WTC11 (cell line): ENCODE measurements at regions of chr17 and their contacts with region 1.

Region 1: DNA sequence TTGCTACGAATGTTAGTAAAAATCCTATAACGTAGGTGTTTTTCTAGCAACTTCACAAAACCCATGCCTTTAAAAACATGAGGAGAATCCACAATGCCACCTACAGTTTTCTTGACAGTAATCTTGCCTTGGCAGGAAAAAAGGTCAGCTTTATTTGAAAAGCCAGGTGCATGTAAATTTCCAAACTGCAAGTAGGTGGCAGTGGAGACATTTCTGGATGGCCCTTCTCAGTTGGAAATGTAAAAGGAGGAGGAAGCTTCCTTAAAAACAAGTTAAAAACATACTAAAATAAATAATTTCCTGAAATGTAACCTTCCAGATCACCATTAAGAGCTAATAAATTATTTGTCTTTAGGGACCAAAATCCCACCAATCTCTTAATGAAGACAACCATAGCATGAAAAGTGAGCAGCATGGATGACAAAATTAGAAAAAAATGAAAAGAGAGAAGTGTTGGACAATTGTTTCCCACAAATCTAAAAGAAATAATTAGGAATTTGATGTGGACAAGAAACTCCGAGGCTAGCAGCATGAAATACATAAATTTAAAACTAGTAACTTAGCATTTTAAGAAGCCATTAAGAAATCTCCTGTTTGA is 152.2 kb downstream of the SNX11 start:
- DNase-seq: no peak
- ATAC-seq: no peak
- H3K4me3 Mint-ChIP-seq: no peak overlapping the region
- H3K27ac Mint-ChIP-seq: no peak overlapping the region
- H3K4me1 Mint-ChIP-seq: peaks cover 33% of the 10 kb centered on the region
- H3K27me3 Mint-ChIP-seq: no peaks in the 10 kb centered on the region
- CTCF ChIP-seq: 0 out of 2 replicates have a peak, but pooled peaks have one; percentile 19

Region 2: DNA sequence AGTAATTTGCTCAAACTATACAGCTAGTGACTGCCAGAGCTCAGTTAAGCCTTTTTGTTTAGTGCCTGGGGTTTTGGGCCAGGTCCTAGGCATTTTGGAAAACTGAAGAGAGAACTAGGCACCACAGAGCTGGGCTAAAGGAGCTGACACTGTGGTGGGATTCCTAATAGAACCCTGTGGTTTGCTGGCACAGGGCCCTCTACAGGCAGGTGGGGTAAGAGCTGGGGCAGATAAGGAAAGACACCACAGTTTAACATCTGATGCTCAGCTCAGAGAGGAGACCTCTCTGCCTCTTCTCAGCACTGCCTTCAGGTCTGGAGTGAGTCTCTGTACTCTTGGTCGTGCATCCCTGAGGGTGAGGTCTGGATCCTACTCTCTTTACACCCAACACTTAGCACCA is 31.1 kb before region 1 on chr17:
- CTCF ChIA-PET with region 1: interaction called, 19 read pairs
- POLR2A ChIA-PET with region 1: no interaction called
- DNase-seq: peak; percentile 60
- ATAC-seq: peak; percentile 99
- H3K4me3 Mint-ChIP-seq: no peak overlapping the region
- H3K27ac Mint-ChIP-seq: no peak overlapping the region
- H3K4me1 Mint-ChIP-seq: peaks cover 18% of the 10 kb centered on the region
- H3K27me3 Mint-ChIP-seq: no peaks in the 10 kb centered on the region; the same call in 1 of the 2 replicates
- CTCF ChIP-seq: no peak

Region 3: DNA sequence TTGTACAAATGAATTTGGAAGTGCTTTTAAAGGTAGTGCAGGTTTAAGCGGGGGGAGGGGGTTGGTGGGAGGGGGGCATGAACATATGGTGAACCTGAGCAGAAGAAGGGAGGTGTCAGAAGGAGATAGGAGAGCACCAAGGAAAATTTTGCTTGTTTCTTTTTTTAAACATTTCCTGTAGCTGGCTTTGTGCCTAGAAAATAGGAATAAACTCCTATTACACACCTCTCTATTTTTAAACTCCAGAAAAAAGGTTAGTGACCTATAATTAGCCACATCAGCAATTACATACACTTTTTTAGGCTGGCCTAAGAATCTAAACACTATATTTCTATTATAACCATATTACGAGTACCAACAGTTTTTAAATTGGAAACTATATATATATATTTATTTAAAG is 11.1 kb after region 1 on chr17:
- CTCF ChIA-PET with region 1: interaction called, 12 read pairs
- POLR2A ChIA-PET with region 1: no interaction called
- DNase-seq: no peak
- ATAC-seq: no peak
- H3K4me3 Mint-ChIP-seq: no peak overlapping the region
- H3K27ac Mint-ChIP-seq: no peak overlapping the region
- H3K4me1 Mint-ChIP-seq: peaks cover 7% of the 10 kb centered on the region
- H3K27me3 Mint-ChIP-seq: peaks cover 12% of the 10 kb centered on the region
- CTCF ChIP-seq: no peak

Region 4: DNA sequence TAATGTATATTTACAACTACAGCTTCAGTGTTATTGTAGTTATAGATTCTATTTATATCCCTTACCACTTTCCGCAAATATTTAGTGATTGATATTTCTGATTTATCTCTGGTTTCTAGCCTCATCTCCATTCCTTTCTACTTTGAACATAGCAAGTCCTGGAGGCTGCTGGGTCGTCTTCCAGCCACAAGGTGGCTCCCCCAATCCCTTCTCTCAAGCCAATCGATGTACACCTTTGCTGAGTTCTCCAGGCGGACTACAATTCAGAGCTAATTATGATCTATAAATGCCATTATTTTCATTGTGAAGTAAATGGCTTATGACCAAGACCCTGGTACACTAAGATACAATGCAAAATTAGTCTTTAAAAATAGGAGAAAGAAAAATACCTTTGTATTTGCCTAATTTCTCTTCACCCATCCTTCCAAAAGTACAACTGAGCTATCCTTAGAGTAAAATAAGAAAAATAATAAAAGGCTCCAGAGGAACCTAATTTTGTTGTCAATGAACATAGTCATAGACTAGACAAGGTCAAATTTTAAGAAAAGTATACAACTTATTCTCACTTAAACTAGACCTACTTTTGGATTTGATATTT is 48.1 kb after region 1 on chr17:
- CTCF ChIA-PET with region 1: interaction called, 26 read pairs
- POLR2A ChIA-PET with region 1: no interaction called
- DNase-seq: peak; percentile 59
- ATAC-seq: peak; percentile 81
- H3K4me3 Mint-ChIP-seq: no peak overlapping the region
- H3K27ac Mint-ChIP-seq: no peak overlapping the region
- H3K4me1 Mint-ChIP-seq: peaks cover 14% of the 10 kb centered on the region
- H3K27me3 Mint-ChIP-seq: peaks cover 18% of the 10 kb centered on the region
- CTCF ChIP-seq: peak; percentile 69

Region 5: GRCh38 chr17:48351831-48352332 is 92.1 kb after region 1 on chr17:
- CTCF ChIA-PET with region 1: interaction called, 10 read pairs
- POLR2A ChIA-PET with region 1: no interaction called
- DNase-seq: no peak
- ATAC-seq: no peak
- H3K4me3 Mint-ChIP-seq: no peak overlapping the region
- H3K27ac Mint-ChIP-seq: no peak overlapping the region
- H3K4me1 Mint-ChIP-seq: no peaks in the 10 kb centered on the region
- H3K27me3 Mint-ChIP-seq: peaks cover 26% of the 10 kb centered on the region
- CTCF ChIP-seq: peak; percentile 40; the same call in 1 of the 2 replicates

Region 6: GRCh38 chr17:48412841-48413240 is 153.0 kb after region 1 on chr17:
- CTCF ChIA-PET with region 1: no interaction called
- POLR2A ChIA-PET with region 1: no interaction called
- DNase-seq: no peak
- ATAC-seq: no peak
- H3K4me3 Mint-ChIP-seq: no peak overlapping the region
- H3K27ac Mint-ChIP-seq: no peak overlapping the region
- H3K4me1 Mint-ChIP-seq: peaks cover 15% of the 10 kb centered on the region
- H3K27me3 Mint-ChIP-seq: peaks cover 3% of the 10 kb centered on the region; the same call in 1 of the 2 replicates
- CTCF ChIP-seq: no peak